ENCODE measurements at regions of chr10 and their contacts with region 1.

Region 1: DNA sequence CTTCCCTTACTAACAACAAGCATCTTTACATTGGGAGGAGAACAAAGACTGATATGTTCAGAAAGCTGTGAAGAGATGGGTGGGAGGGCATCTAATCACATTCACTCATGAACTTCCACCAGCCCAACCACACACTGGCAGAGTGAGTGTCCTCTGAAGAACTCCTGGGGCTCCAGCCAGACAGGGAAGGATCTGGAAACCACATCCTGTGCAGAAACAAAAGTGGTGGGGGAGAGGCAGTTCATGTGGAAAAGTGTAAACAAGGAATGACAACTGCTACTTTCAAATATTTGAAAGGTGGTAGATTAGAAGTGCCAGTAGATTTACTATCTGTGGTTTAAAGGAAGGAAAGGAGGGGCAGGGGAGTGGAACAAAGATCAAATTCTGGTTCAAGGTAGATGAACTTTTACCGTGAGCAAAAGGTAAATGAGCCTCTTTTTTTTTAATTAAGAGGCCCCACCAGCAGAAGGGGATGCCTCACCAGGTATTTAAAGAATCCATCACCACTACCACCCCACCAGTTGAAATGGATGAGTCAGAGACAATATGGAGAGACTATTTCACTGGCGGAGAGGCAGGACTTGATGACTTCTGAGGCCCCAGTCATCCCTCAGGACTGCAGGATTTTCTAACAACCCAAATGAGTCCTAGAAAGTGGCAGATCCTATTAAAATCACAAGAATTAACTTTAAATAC is 34.5 kb downstream of the GOT1 start:
- DNase-seq: no peak
- ATAC-seq: no peak
- H3K4me3 ChIP-seq: no peak overlapping the region
- H3K4me3 Mint-ChIP-seq: no peak overlapping the region
- H3K27ac ChIP-seq: no peak overlapping the region
- H3K27ac Mint-ChIP-seq: no peak overlapping the region
- H3K4me1 ChIP-seq: peaks cover 2 to 4% of the 10 kb centered on the region in 2 donors
- H3K4me1 Mint-ChIP-seq: peaks cover 1% of the 10 kb centered on the region
- H3K27me3 ChIP-seq: peaks cover 0 to 2% (median 0%) of the 10 kb centered on the region in 4 experiments
- H3K27me3 Mint-ChIP-seq: no peaks in the 10 kb centered on the region
- CTCF ChIP-seq: no peak

Region 2: DNA sequence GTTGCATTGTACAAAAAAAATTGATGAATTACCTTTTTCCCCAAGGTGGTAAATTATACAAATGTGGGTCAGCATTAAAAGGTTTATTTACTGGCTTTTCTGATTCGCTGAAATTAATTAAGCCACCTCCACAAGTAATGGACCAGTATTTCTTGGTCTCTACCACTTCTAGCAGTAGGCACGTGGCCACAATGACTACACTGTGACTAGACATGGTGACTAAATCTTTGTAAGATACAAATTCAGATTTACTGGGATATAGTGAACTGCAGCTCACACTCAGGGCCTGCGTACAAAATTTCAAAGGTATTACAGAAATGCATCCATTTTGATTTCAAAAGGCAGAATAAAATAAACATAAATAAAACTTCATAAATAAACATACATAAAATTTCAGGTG is 171.1 kb before region 1 on chr10:
- CTCF ChIA-PET with region 1: no interaction called
- POLR2A ChIA-PET with region 1: no interaction called
- intact Hi-C with region 1: no loop called
- DNase-seq: no peak
- ATAC-seq: no peak
- H3K4me3 ChIP-seq: no peak overlapping the region
- H3K4me3 Mint-ChIP-seq: no peak overlapping the region
- H3K27ac ChIP-seq: no peak overlapping the region
- H3K27ac Mint-ChIP-seq: no peak overlapping the region
- H3K4me1 ChIP-seq: no peaks in the 10 kb centered on the region
- H3K4me1 Mint-ChIP-seq: no peaks in the 10 kb centered on the region
- H3K27me3 ChIP-seq: peaks cover 0 to 37% (median 3%) of the 10 kb centered on the region in 4 experiments
- H3K27me3 Mint-ChIP-seq: peaks cover 61% of the 10 kb centered on the region
- CTCF ChIP-seq: no peak

Region 3: GRCh38 chr10:99711129-99711719 is 315.3 kb after region 1 on chr10:
- CTCF ChIA-PET with region 1: interaction called, 28 read pairs
- POLR2A ChIA-PET with region 1: no interaction called
- intact Hi-C with region 1: loop called (anchors 1 kb)
- DNase-seq: peak; percentile 65
- ATAC-seq: peak; percentile 51
- H3K4me3 ChIP-seq: no peak overlapping the region
- H3K4me3 Mint-ChIP-seq: no peak overlapping the region
- H3K27ac ChIP-seq: no peak overlapping the region
- H3K27ac Mint-ChIP-seq: no peak overlapping the region
- H3K4me1 ChIP-seq: no peaks in the 10 kb centered on the region
- H3K4me1 Mint-ChIP-seq: no peaks in the 10 kb centered on the region
- H3K27me3 ChIP-seq: no peaks in the 10 kb centered on the region
- H3K27me3 Mint-ChIP-seq: no peaks in the 10 kb centered on the region
- CTCF ChIP-seq: peak; percentile 70

Measured in B cell (primary cell).